Activated naive CD4-positive, alpha-beta T cell treated with anti-CD3 and anti-CD28 coated beads for 36 hours (primary cell): ENCODE measurements at regions of chr10 and their contacts with region 1.

Region 1: GRCh38 chr10:3757638-3758490 is 27.1 kb downstream of the KLF6 start:
- DNase-seq: peak; percentile 84
- H3K4me3 Mint-ChIP-seq: peak overlapping the region; percentile 62
- H3K27ac Mint-ChIP-seq: peak overlapping the region; percentile 99
- H3K4me1 Mint-ChIP-seq: peaks cover 77% of the 10 kb centered on the region
- H3K27me3 Mint-ChIP-seq: no peaks in the 10 kb centered on the region

Region 2: GRCh38 chr10:3623746-3624145 is 134.1 kb before region 1 on chr10:
- CTCF ChIA-PET with region 1: no interaction called
- intact Hi-C with region 1: loop called (anchors 1 kb)
- DNase-seq: no peak
- H3K4me3 Mint-ChIP-seq: no peak overlapping the region
- H3K27ac Mint-ChIP-seq: no peak overlapping the region
- H3K4me1 Mint-ChIP-seq: peaks cover 21% of the 10 kb centered on the region
- H3K27me3 Mint-ChIP-seq: peaks cover 2% of the 10 kb centered on the region

Region 3: GRCh38 chr10:3740157-3740871 is 17.6 kb before region 1 on chr10:
- CTCF ChIA-PET with region 1: interaction called, 3 read pairs
- intact Hi-C with region 1: loop called (anchors 1 kb)
- DNase-seq: no peak
- H3K4me3 Mint-ChIP-seq: no peak overlapping the region
- H3K27ac Mint-ChIP-seq: peak overlapping the region; percentile 59
- H3K4me1 Mint-ChIP-seq: peaks cover 31% of the 10 kb centered on the region
- H3K27me3 Mint-ChIP-seq: no peaks in the 10 kb centered on the region

Region 4: GRCh38 chr10:3805791-3806461 is 48.1 kb after region 1 on chr10:
- CTCF ChIA-PET with region 1: no interaction called
- intact Hi-C with region 1: loop called (anchors 1 kb)
- DNase-seq: peak; percentile 45
- H3K4me3 Mint-ChIP-seq: peak overlapping the region; percentile 10
- H3K27ac Mint-ChIP-seq: no peak overlapping the region
- H3K4me1 Mint-ChIP-seq: peaks cover 73% of the 10 kb centered on the region
- H3K27me3 Mint-ChIP-seq: no peaks in the 10 kb centered on the region

Region 5: DNA sequence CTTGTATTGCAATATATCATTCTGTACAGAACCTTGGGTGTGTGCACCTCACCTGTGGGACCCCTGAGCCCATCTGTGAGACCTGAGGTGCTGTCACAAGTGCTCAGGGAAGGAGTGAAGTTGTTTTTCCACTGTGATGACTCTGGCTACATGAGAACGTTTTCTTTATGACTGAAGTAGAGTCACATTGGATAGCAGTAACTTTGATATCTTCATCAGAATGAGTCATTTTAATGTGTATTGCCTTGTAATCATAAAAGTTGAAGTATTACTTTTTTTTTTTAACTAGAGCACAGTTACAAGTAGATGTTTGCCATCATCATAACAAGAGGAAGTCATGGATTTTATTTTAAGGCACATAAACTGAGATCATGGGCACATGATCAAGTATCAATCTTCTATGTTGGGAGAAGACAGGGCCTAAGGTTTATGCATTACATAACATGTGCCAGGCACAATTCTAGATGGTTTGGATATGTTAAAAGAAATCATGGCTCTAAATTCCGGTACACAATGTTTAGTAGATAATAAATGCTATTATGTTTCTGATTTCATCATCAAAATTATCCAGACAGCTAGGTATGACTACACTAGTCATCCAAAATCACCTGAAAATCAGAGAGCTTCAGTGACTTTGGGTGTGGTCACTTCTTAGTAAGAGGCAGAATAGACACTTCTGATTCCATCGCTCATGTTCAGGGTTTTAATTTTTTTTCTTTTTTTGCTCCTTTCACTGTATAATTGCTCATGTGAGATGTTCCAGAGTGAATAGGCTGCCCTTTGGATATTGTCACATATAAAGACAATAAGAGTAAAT is 109.8 kb after region 1 on chr10:
- CTCF ChIA-PET with region 1: no interaction called
- intact Hi-C with region 1: loop called (anchors 1 kb)
- DNase-seq: peak; percentile 46
- H3K4me3 Mint-ChIP-seq: no peak overlapping the region
- H3K27ac Mint-ChIP-seq: peak overlapping the region; percentile 70
- H3K4me1 Mint-ChIP-seq: peaks cover 53% of the 10 kb centered on the region
- H3K27me3 Mint-ChIP-seq: no peaks in the 10 kb centered on the region

Region 6: GRCh38 chr10:4131407-4132228 is 373.8 kb after region 1 on chr10:
- CTCF ChIA-PET with region 1: no interaction called
- intact Hi-C with region 1: loop called (anchors 2 kb)
- DNase-seq: peak; percentile 43
- H3K4me3 Mint-ChIP-seq: no peak overlapping the region
- H3K27ac Mint-ChIP-seq: no peak overlapping the region
- H3K4me1 Mint-ChIP-seq: peaks cover 24% of the 10 kb centered on the region
- H3K27me3 Mint-ChIP-seq: no peaks in the 10 kb centered on the region